ENCODE measurements at regions of chr17 and their contacts with region 1.

Region 1: GRCh38 chr17:42720996-42721583 is 23.8 kb downstream of the EZH1 start:
- DNase-seq: no peak
- H3K4me3 ChIP-seq: no peak overlapping the region
- H3K27ac ChIP-seq: no peak overlapping the region
- H3K4me1 ChIP-seq: peaks cover 0 to 4% (median 0%) of the 10 kb centered on the region in 6 donors
- H3K27me3 ChIP-seq: no peaks in the 10 kb centered on the region
- CTCF ChIP-seq: peak in 10 of 11 experiments; percentile 37 to 75 (median 68)
- POLR2A ChIP-seq: no peak

Region 2: GRCh38 chr17:42760652-42761581 is 39.8 kb after region 1 on chr17 and contains the start of gene RAMP2:
- intact Hi-C with region 1: loop called (anchors 5 kb)
- DNase-seq: peak; percentile 74
- H3K4me3 ChIP-seq: peak within 1 kb of the TSS; percentile 16 to 71 (median 44)
- H3K27ac ChIP-seq: peak within 1 kb of the TSS in 6 of 8 donors; percentile 42 to 77 (median 66)
- H3K4me1 ChIP-seq: peaks cover 13 to 55% (median 38%) of the 10 kb centered on the region in 6 donors
- H3K27me3 ChIP-seq: peaks cover 0 to 52% (median 22%) of the 10 kb centered on the region in 7 donors
- CTCF ChIP-seq: no peak
- POLR2A ChIP-seq: no peak
- total RNA-seq, gene RAMP2: 9.7 to 34.3 (median 27.0) TPM

Region 3: GRCh38 chr17:42819944-42820535 is 99.0 kb after region 1 on chr17:
- intact Hi-C with region 1: loop called (anchors 10 kb)
- DNase-seq: peak; percentile 83
- H3K4me3 ChIP-seq: no peak overlapping the region
- H3K27ac ChIP-seq: no peak overlapping the region
- H3K4me1 ChIP-seq: peaks cover 8 to 65% (median 32%) of the 10 kb centered on the region in 6 donors
- H3K27me3 ChIP-seq: no peaks in the 10 kb centered on the region
- CTCF ChIP-seq: peak in 9 of 11 experiments; percentile 31 to 75 (median 65)
- POLR2A ChIP-seq: no peak

Region 4: DNA sequence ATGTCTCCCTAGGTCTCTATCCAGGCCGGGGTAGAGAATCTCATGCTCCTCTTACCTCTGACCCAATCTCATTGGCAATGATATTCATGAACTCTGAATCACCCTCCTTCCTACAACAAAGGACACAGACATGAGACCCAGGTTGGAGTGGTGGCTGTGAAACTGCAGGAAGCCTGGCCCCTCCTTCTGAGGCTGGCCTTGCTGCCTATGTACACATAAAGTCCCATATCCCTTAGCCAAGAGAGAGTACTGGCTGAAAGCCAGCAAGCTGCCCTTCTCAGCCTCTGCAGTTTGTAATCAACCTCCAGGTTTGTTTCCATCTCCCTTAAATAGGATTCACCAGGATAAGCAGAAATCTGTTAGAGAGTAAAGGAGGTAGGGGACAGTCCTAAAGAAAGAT is 232.6 kb after region 1 on chr17:
- intact Hi-C with region 1: no loop called
- DNase-seq: no peak
- H3K4me3 ChIP-seq: no peak overlapping the region
- H3K27ac ChIP-seq: no peak overlapping the region
- H3K4me1 ChIP-seq: no peaks in the 10 kb centered on the region
- H3K27me3 ChIP-seq: no peaks in the 10 kb centered on the region
- CTCF ChIP-seq: no peak
- POLR2A ChIP-seq: no peak

Region 5: DNA sequence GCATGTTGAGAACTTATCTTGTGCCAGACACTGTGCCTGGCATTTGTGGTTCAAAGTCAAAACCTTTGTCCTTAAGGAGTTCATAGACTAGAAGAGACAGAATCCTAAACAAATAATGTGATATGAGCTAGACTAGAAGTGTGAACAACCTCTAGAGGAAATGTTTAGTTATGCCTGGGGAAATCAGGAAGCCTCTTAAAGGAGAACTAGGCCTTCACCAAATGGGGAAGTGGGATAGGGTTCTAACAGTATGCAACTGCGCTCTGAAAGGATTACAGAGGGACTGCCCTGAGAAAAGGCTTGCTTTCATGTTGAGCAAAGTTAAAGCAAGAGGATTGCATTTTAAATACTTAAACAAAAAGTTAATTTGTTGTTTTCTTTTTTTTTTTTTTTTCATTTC is 264.1 kb after region 1 on chr17:
- intact Hi-C with region 1: no loop called
- DNase-seq: no peak
- H3K4me3 ChIP-seq: peak overlapping the region in 2 of 8 donors; percentile 4 to 49
- H3K27ac ChIP-seq: peak overlapping the region; percentile 57 to 88 (median 74)
- H3K4me1 ChIP-seq: peaks cover 17 to 79% (median 58%) of the 10 kb centered on the region in 6 donors
- H3K27me3 ChIP-seq: no peaks in the 10 kb centered on the region
- CTCF ChIP-seq: no peak
- POLR2A ChIP-seq: no peak

Measured in spleen (tissue), 13 donors.